ENCODE measurements at regions of chr10 and their contacts with region 1.

Region 1: DNA sequence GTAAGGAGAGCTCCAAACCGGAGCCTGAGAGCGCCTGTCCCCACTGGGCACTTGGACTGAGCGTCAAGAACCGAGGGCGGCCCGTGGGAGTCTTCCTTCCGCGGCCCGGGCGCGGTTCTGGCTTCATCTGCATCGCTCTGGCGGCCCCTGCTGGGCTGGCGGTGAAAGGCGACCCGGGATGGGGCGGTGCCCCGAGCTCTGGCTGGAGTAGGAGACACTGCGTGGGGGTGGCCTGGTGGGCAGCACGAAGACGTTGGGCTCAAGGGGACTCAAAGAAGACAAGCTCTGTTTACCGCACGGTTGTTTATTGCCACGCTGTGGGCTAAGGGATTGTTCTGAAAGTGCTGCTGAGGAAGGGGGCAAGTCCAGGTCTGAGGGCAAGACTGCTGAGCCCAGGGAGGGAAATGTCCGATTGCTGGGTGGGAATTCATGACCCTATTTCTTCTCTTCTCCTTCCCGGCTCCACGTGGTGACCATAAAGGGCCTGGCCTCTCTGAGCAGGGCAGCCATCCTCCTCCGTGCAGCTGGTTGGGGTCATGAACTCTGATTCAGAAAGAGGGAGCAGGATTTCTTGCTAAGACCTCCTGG is 29.8 kb downstream of the PLAU start:
- DNase-seq: peak; percentile 57 to 87
- H3K4me3 ChIP-seq: peak overlapping the region; percentile 44; the same call in 1 of the 2 replicates
- H3K27ac ChIP-seq: peak overlapping the region; percentile 64
- H3K4me1 ChIP-seq: peaks cover 38% of the 10 kb centered on the region
- H3K27me3 ChIP-seq: no peaks in the 10 kb centered on the region
- CTCF ChIP-seq: peak; percentile 96

Region 2: GRCh38 chr10:73848821-73849489 is 91.8 kb before region 1 on chr10:
- CTCF ChIA-PET with region 1: interaction called, 3 read pairs
- POLR2A ChIA-PET with region 1: no interaction called
- intact Hi-C with region 1: loop called (anchors 1 kb)
- DNase-seq: peak; percentile 66 to 82
- H3K4me3 ChIP-seq: no peak overlapping the region
- H3K27ac ChIP-seq: no peak overlapping the region
- H3K4me1 ChIP-seq: no peaks in the 10 kb centered on the region
- H3K27me3 ChIP-seq: no peaks in the 10 kb centered on the region
- CTCF ChIP-seq: peak; percentile 100

Region 3: GRCh38 chr10:73899423-73899822 is 41.3 kb before region 1 on chr10:
- CTCF ChIA-PET with region 1: interaction called, 14 read pairs
- POLR2A ChIA-PET with region 1: interaction called, 7 read pairs
- intact Hi-C with region 1: no loop called
- DNase-seq: peak; percentile 87 to 99
- H3K4me3 ChIP-seq: peak overlapping the region; percentile 4; the same call in 1 of the 2 replicates
- H3K27ac ChIP-seq: peak overlapping the region; percentile 98
- H3K4me1 ChIP-seq: peaks cover 83% of the 10 kb centered on the region
- H3K27me3 ChIP-seq: no peaks in the 10 kb centered on the region
- CTCF ChIP-seq: no peak

Region 4: DNA sequence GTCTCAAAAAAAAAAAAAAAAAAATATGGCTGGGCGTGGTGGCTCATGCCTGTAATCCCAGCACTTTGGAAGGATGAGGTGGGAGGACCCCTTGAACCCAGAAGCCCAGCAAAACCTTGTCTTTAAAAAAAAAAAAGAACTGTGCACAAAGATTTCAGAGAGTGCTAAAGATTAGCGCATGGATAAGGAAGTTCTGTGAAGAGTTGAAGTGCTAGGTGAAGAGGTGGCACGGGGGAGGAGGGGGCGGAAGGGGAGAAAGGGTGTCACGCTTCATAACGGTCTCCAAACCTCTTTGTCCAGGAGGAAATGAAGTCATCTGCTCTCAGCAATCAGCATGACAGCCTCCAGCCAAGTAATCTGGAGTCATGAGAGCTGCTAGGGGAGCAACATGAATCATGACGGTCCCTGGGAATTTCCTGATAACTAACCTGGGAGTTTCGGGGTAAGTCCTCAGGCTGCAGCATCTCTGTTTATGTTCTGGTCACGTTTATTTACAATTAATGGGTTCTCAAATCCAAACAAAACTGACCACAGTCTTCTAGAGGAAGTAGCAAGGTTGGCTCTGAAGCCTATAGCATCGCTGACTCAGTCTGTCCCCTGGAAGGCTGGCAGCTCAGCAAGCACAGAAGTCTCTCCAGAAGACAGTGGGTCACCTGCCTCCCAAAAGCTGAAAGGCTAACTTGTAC is 31.7 kb before region 1 on chr10:
- CTCF ChIA-PET with region 1: interaction called, 13 read pairs
- POLR2A ChIA-PET with region 1: no interaction called
- intact Hi-C with region 1: no loop called
- DNase-seq: peak; percentile 77 to 100
- H3K4me3 ChIP-seq: peak overlapping the region; percentile 85; the same call in 1 of the 2 replicates
- H3K27ac ChIP-seq: peak overlapping the region; percentile 97
- H3K4me1 ChIP-seq: peaks cover 85% of the 10 kb centered on the region
- H3K27me3 ChIP-seq: no peaks in the 10 kb centered on the region
- CTCF ChIP-seq: no peak

Region 5: DNA sequence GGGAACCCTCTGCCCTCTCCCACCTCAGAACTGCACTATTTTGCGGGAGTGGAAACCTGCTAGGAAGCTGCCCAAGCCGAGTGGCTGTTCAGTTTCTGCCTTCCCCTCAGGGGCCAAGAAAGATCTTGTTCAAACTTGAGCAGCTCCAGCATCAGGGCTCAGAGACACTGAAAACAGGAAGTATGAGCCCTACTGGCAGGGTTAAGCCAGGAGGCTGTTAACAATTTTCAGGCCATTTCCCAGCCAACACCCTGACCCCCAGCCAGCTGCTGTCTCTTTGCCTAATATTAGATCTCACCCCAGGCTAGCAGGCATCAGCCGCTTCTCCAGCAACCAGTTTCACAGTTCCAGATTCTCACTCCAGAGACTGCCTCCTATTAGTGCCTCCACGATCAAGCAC is 20.6 kb before region 1 on chr10:
- CTCF ChIA-PET with region 1: interaction called, 19 read pairs
- POLR2A ChIA-PET with region 1: no interaction called
- intact Hi-C with region 1: no loop called
- DNase-seq: no peak
- H3K4me3 ChIP-seq: no peak overlapping the region
- H3K27ac ChIP-seq: no peak overlapping the region
- H3K4me1 ChIP-seq: peaks cover 5% of the 10 kb centered on the region; the same call in 1 of the 2 replicates
- H3K27me3 ChIP-seq: no peaks in the 10 kb centered on the region
- CTCF ChIP-seq: no peak

Region 6: GRCh38 chr10:73956476-73957359 is 16.0 kb after region 1 on chr10:
- CTCF ChIA-PET with region 1: interaction called, 11 read pairs
- POLR2A ChIA-PET with region 1: interaction called, 6 read pairs
- intact Hi-C with region 1: no loop called
- DNase-seq: peak; percentile 85 to 95
- H3K4me3 ChIP-seq: peak overlapping the region; percentile 15; the same call in 1 of the 2 replicates
- H3K27ac ChIP-seq: peak overlapping the region; percentile 89
- H3K4me1 ChIP-seq: peaks cover 44% of the 10 kb centered on the region
- H3K27me3 ChIP-seq: no peaks in the 10 kb centered on the region
- CTCF ChIP-seq: no peak

Region 7: GRCh38 chr10:74058658-74059057 is 117.9 kb after region 1 on chr10:
- CTCF ChIA-PET with region 1: interaction called, 10 read pairs
- POLR2A ChIA-PET with region 1: no interaction called
- intact Hi-C with region 1: no loop called
- DNase-seq: no peak
- H3K4me3 ChIP-seq: no peak overlapping the region
- H3K27ac ChIP-seq: peak overlapping the region; percentile 92; the same call in 1 of the 2 replicates
- H3K4me1 ChIP-seq: peaks cover 50% of the 10 kb centered on the region
- H3K27me3 ChIP-seq: no peaks in the 10 kb centered on the region
- CTCF ChIP-seq: no peak; the same call in 1 of the 2 replicates